ENCODE measurements at regions of chr16 and their contacts with region 1.

Region 1: GRCh38 chr16:84754353-84754856 is 54.6 kb downstream of the USP10 start:
- DNase-seq: peak; percentile 74 to 89 (median 77)
- ATAC-seq: peak; percentile 91
- H3K4me3 ChIP-seq: no peak overlapping the region
- H3K27ac ChIP-seq: no peak overlapping the region
- H3K4me1 ChIP-seq: peaks cover 0 to 18% of the 10 kb centered on the region in 2 experiments; a peak in 3 of 5 replicates
- H3K27me3 ChIP-seq: no peaks in the 10 kb centered on the region
- CTCF ChIP-seq: peak; percentile 76 to 91 (median 88)
- EP300 ChIP-seq: no peak
- POLR2A ChIP-seq: no peak
- RAD21 ChIP-seq: peak; percentile 85 to 90

Region 2: GRCh38 chr16:83606486-83607030 is 1147.8 kb before region 1 on chr16:
- CTCF ChIA-PET with region 1: no interaction called
- POLR2A ChIA-PET with region 1: no interaction called
- in situ Hi-C with region 1: no loop called
- intact Hi-C with region 1: no loop called
- DNase-seq: peak in 3 of 4 experiments; percentile 13 to 24 (median 17)
- ATAC-seq: peak; percentile 85
- H3K4me3 ChIP-seq: no peak overlapping the region
- H3K27ac ChIP-seq: no peak overlapping the region
- H3K4me1 ChIP-seq: no peaks in the 10 kb centered on the region
- H3K27me3 ChIP-seq: 0 out of 5 replicates have a peak, but pooled peaks cover 0 to under 1% of the 10 kb centered on the region in 2 experiments
- CTCF ChIP-seq: peak in 2 of 3 experiments; percentile 4 to 37; a peak in 1 of 6 replicates
- EP300 ChIP-seq: no peak
- POLR2A ChIP-seq: no peak
- RAD21 ChIP-seq: no peak

Region 3: DNA sequence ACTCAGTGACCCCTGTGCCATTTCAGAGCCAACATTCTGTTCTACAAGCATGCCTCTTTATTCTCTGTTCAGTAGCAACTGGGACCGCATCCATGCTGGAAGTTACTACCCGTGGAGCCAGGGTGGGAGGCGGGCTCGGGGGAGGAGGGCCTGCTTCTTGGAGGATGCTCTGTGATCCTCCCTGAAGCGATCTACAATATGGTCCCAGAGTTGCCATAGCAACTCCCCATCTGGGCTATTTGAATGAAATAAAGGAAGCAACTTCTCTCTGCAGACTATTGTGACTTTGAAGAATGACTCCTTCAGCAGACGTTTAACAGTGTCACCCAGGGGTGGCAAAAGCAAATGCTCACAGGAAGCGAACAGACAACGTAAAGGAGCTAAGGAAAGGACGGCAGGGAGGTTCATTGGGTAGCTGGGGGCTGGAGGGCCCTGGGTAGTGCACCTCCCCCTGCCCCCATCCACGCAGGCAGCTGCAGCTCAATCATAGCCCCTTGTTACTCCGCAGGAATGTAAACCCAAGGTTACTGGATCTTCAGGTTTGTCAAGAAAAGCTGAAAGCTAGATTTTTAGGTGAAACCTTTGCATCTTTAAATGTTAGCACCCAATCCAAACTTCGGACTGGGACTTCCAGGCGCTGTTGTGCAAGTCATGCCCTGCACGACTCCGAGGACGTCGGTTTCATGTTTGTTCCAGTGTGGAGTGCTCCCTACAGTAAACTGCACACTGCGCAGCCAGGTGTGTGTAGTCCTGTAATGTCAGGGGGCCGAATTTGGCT is 198.8 kb before region 1 on chr16:
- CTCF ChIA-PET with region 1: no interaction called
- POLR2A ChIA-PET with region 1: no interaction called
- in situ Hi-C with region 1: no loop called
- intact Hi-C with region 1: no loop called
- DNase-seq: no peak
- ATAC-seq: peak; percentile 22; the same call in 1 of the 3 replicates
- H3K4me3 ChIP-seq: no peak overlapping the region
- H3K27ac ChIP-seq: no peak overlapping the region
- H3K4me1 ChIP-seq: peaks cover 0 to 4% of the 10 kb centered on the region in 2 experiments; a peak in 3 of 5 replicates
- H3K27me3 ChIP-seq: peaks cover 28 to 36% of the 10 kb centered on the region in 2 experiments
- CTCF ChIP-seq: 0 out of 6 replicates have a peak, but pooled peaks of 2 of the 3 experiments have one; percentile 3 to 11
- EP300 ChIP-seq: no peak
- POLR2A ChIP-seq: no peak
- RAD21 ChIP-seq: no peak

Region 4: GRCh38 chr16:84916850-84917249 is 162.4 kb after region 1 on chr16:
- CTCF ChIA-PET with region 1: no interaction called
- POLR2A ChIA-PET with region 1: no interaction called
- in situ Hi-C with region 1: no loop called
- intact Hi-C with region 1: loop called (anchors 2 kb)
- DNase-seq: no peak
- ATAC-seq: no peak
- H3K4me3 ChIP-seq: no peak overlapping the region
- H3K27ac ChIP-seq: no peak overlapping the region
- H3K4me1 ChIP-seq: peaks cover 3 to 7% of the 10 kb centered on the region in 2 experiments; a peak in 3 of 5 replicates
- H3K27me3 ChIP-seq: peaks cover 62 to 83% of the 10 kb centered on the region in 2 experiments
- CTCF ChIP-seq: no peak
- EP300 ChIP-seq: no peak
- POLR2A ChIP-seq: no peak
- RAD21 ChIP-seq: no peak

Region 5: DNA sequence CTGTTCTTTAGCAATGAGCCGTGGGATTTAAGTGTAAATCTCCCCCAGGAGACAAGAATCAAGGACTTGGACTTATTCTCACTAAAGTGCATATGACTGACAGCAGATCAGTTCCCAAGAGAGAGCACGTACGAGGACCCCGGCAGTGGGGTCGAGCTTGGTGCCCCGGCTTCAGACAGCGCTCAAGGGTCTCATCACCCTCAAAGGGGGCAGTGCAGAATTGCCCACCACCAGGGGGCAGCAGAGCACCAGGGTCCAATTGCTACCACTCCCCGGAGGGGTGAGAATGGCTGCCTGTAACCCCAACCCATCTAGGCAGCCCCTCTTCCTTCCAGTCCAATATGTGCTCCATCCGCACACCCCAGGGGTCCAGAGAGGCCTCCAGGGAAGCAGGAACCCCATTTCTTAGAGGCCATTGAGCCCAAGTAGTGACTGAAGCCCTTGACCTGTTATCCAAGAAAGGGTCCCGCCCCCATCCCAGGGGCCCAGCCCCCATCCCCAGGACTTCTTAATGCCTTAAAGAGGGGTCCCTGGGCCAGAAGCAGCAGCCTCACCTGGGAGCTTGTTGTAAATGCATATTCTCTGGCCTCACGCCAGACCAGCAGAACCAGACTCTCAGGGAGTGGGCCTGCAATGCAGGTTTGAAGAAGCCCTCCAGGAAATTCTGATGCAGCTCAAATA is 170.8 kb after region 1 on chr16:
- CTCF ChIA-PET with region 1: interaction called, 8 read pairs
- POLR2A ChIA-PET with region 1: no interaction called
- in situ Hi-C with region 1: no loop called
- intact Hi-C with region 1: loop called (anchors 2 kb)
- DNase-seq: peak; percentile 85 to 88 (median 86)
- ATAC-seq: peak; percentile 90
- H3K4me3 ChIP-seq: no peak overlapping the region
- H3K27ac ChIP-seq: no peak overlapping the region
- H3K4me1 ChIP-seq: peaks cover 10 to 54% of the 10 kb centered on the region in 2 experiments
- H3K27me3 ChIP-seq: peaks cover 3 to 10% of the 10 kb centered on the region in 2 experiments; a peak in 2 of 5 replicates
- CTCF ChIP-seq: peak; percentile 95 to 99 (median 97)
- EP300 ChIP-seq: no peak
- POLR2A ChIP-seq: no peak
- RAD21 ChIP-seq: peak; percentile 98 to 99

Region 6: DNA sequence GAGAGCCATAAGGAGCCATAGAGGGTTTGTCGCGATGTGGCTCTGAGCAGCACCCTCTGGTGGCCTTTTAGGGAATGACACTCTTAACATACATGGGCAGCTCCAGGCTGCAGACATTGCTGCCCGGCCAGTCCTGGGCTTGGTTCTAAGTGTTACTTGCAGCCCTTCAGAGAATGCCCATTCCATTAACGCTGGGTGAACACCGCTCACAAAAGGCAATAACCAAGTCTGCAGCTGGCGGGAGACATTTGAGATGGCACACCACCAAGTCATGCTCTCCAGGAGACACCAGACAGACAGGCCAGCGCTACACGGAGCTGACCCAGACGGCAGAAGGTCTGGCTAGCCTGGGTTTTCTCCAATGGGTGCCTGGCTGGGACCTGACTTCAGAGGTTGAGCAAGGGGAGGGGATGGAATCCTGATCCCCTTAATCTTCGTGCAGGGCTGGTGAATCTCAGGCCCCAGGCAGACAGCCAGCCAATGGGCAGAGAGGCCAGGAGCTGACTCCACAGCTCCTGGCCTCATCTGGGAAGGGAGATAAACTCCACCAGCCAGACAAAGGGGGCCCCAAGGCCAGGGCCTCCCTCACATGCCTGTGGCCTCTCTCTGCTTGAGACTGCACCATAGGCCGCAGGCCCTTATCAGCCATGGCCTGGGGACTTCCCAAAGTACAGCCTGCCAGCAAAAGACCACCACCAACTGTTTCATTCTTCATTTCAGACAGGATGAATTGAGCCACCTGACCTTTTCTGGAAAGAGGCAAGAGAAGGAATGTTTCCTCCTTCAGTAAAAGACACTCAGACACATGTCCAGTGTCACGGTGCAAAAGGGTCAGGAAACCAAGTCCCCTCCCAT is 198.2 kb after region 1 on chr16:
- CTCF ChIA-PET with region 1: interaction called, 34 read pairs
- POLR2A ChIA-PET with region 1: interaction called, 5 read pairs
- in situ Hi-C with region 1: no loop called
- intact Hi-C with region 1: loop called (anchors 1 kb)
- DNase-seq: peak; percentile 90 to 99 (median 94)
- ATAC-seq: peak; percentile 95
- H3K4me3 ChIP-seq: no peak overlapping the region
- H3K27ac ChIP-seq: peak overlapping the region; percentile 67
- H3K4me1 ChIP-seq: peaks cover 21 to 56% of the 10 kb centered on the region in 2 experiments
- H3K27me3 ChIP-seq: no peaks in the 10 kb centered on the region
- CTCF ChIP-seq: peak; percentile 91 to 98 (median 93)
- EP300 ChIP-seq: peak; percentile 94
- POLR2A ChIP-seq: no peak
- RAD21 ChIP-seq: peak; percentile 83 to 88

Region 7: GRCh38 chr16:84959784-84960417 is 205.5 kb after region 1 on chr16:
- CTCF ChIA-PET with region 1: interaction called, 4 read pairs
- POLR2A ChIA-PET with region 1: interaction called, 4 read pairs
- in situ Hi-C with region 1: loop called (anchors 5 kb)
- intact Hi-C with region 1: loop called (anchors 2 kb)
- DNase-seq: peak in 3 of 4 experiments; percentile 47 to 63 (median 60)
- ATAC-seq: no peak
- H3K4me3 ChIP-seq: no peak overlapping the region
- H3K27ac ChIP-seq: no peak overlapping the region
- H3K4me1 ChIP-seq: peaks cover 3 to 23% of the 10 kb centered on the region in 2 experiments; a peak in 2 of 5 replicates
- H3K27me3 ChIP-seq: peaks cover 14 to 19% of the 10 kb centered on the region in 2 experiments; a peak in 3 of 5 replicates
- CTCF ChIP-seq: no peak
- EP300 ChIP-seq: no peak
- POLR2A ChIP-seq: no peak
- RAD21 ChIP-seq: no peak

Region 8: DNA sequence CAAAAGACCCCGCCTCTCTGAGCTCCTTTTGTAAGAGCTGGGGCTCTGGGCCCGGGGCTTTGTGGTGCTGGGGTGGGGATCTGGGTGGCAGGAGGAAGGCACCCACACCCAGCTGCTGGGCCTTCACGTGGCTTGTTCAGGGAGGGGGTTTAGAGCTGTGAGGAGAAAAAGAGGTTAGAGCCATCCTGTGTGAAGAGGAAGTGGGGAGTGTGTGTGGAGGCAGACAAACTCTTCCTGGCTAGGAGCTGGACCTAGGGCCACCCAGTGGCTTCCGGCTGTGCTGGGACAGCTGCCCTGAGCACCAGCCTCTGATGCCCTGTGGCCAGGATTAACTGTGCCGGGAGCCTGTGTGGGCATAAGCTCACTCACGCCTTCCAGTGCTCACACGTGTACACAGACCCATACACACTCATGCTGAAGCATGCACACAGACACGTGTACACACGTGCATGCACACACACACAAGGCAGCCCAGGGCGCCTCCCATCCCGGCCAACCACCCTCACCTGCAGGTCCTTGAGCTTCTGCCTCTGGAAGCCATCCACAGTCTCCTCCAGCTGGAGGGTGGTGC is 350.5 kb after region 1 on chr16:
- CTCF ChIA-PET with region 1: no interaction called
- POLR2A ChIA-PET with region 1: no interaction called
- in situ Hi-C with region 1: no loop called
- intact Hi-C with region 1: no loop called
- DNase-seq: no peak
- ATAC-seq: peak; percentile 22
- H3K4me3 ChIP-seq: no peak overlapping the region
- H3K27ac ChIP-seq: no peak overlapping the region
- H3K4me1 ChIP-seq: peaks cover 0 to 9% of the 10 kb centered on the region in 2 experiments; a peak in 2 of 5 replicates
- H3K27me3 ChIP-seq: peaks cover 31 to 53% of the 10 kb centered on the region in 2 experiments
- CTCF ChIP-seq: no peak
- EP300 ChIP-seq: no peak
- POLR2A ChIP-seq: no peak
- RAD21 ChIP-seq: no peak

Measured in K562 (cell line).